CD8-positive, alpha-beta T cell (primary cell): ENCODE measurements at regions of chr6 and their contacts with region 1.

Region 1: GRCh38 chr6:135145063-135145800 is 35.9 kb upstream of the MYB start:
- DNase-seq: peak in 2 of 9 experiments; percentile 51 to 65
- ATAC-seq: peak; percentile 79
- H3K4me3 ChIP-seq: no peak overlapping the region
- H3K4me3 Mint-ChIP-seq: peak overlapping the region; percentile 32
- H3K27ac ChIP-seq: peak overlapping the region in 1 of 2 experiments; percentile 9
- H3K27ac Mint-ChIP-seq: peak overlapping the region; percentile 58
- H3K4me1 ChIP-seq: peaks cover 14% of the 10 kb centered on the region
- H3K4me1 Mint-ChIP-seq: peaks cover 39% of the 10 kb centered on the region
- H3K27me3 ChIP-seq: no peaks in the 10 kb centered on the region
- H3K27me3 Mint-ChIP-seq: no peaks in the 10 kb centered on the region
- CTCF ChIP-seq: peak; percentile 81

Region 2: GRCh38 chr6:135054569-135055498 is 90.4 kb before region 1 on chr6 and contains the start of gene HBS1L:
- CTCF ChIA-PET with region 1: interaction called, 22 read pairs
- POLR2A ChIA-PET with region 1: interaction called, 16 read pairs
- intact Hi-C with region 1: no loop called
- DNase-seq: peak; percentile 91 to 100 (median 96)
- ATAC-seq: peak; percentile 96
- H3K4me3 ChIP-seq: peak within 1 kb of the TSS; percentile 76 to 88
- H3K4me3 Mint-ChIP-seq: peak within 1 kb of the TSS; percentile 98
- H3K27ac ChIP-seq: peak within 1 kb of the TSS; percentile 87 to 90
- H3K27ac Mint-ChIP-seq: peak within 1 kb of the TSS; percentile 99
- H3K4me1 ChIP-seq: peaks cover 25% of the 10 kb centered on the region
- H3K4me1 Mint-ChIP-seq: peaks cover 42% of the 10 kb centered on the region
- H3K27me3 ChIP-seq: no peaks in the 10 kb centered on the region
- H3K27me3 Mint-ChIP-seq: no peaks in the 10 kb centered on the region
- CTCF ChIP-seq: no peak
- total RNA-seq, gene HBS1L: 119 to 123 TPM

Region 3: DNA sequence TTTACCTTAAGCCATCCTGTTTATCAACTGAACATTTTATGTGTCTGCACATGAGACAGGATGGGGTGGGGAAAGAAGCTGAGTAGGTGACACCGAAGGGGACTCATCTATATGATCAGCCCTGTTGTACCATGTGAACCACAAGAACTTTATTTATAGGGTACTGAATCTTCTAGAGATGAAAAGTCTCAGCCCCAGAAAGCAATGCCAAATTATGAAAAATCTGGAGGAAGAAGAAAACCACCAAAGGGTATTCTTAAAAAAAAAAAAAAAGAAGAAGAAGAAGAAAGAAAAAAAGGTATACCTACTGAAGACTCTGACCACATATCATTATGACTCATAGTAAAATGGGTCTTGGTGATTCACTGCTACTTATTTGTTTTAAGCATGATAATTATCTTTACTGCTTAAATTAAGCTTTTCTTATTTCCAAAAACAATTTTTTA is 50.8 kb before region 1 on chr6:
- CTCF ChIA-PET with region 1: interaction called, 3 read pairs
- POLR2A ChIA-PET with region 1: no interaction called
- intact Hi-C with region 1: loop called in 1 of 2 experiments (anchors 2 kb)
- DNase-seq: peak in 7 of 9 experiments; percentile 27 to 79 (median 64)
- ATAC-seq: peak; percentile 95
- H3K4me3 ChIP-seq: no peak overlapping the region
- H3K4me3 Mint-ChIP-seq: peak overlapping the region; percentile 0
- H3K27ac ChIP-seq: peak overlapping the region; percentile 29 to 33
- H3K27ac Mint-ChIP-seq: peak overlapping the region; percentile 83
- H3K4me1 ChIP-seq: peaks cover 46% of the 10 kb centered on the region
- H3K4me1 Mint-ChIP-seq: peaks cover 68% of the 10 kb centered on the region
- H3K27me3 ChIP-seq: no peaks in the 10 kb centered on the region
- H3K27me3 Mint-ChIP-seq: no peaks in the 10 kb centered on the region
- CTCF ChIP-seq: no peak

Region 4: DNA sequence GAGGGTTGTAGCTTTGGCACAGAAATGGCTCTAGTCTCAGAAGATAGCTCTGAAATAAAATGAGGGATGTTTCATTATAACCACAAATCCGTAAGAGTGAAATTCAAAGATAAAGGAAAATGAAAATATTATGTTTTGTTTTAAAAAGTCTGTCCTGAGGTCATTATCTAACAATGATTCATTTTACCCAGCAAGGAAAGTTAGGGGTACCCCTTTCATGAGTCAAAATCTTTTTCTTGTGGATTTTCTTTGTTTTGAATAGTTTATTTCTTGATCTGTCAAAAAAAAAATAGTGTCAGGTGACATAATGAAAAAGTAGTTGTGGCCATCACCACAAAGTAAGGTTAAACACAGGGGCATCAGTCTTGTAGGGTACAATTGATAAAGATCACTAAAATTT is 23.8 kb before region 1 on chr6:
- CTCF ChIA-PET with region 1: interaction called, 36 read pairs
- POLR2A ChIA-PET with region 1: interaction called, 5 read pairs
- intact Hi-C with region 1: no loop called
- DNase-seq: no peak
- ATAC-seq: no peak
- H3K4me3 ChIP-seq: no peak overlapping the region
- H3K4me3 Mint-ChIP-seq: no peak overlapping the region
- H3K27ac ChIP-seq: no peak overlapping the region
- H3K27ac Mint-ChIP-seq: no peak overlapping the region
- H3K4me1 ChIP-seq: peaks cover 30% of the 10 kb centered on the region
- H3K4me1 Mint-ChIP-seq: peaks cover 45% of the 10 kb centered on the region
- H3K27me3 ChIP-seq: peaks cover 0 to 4% of the 10 kb centered on the region in 2 experiments
- H3K27me3 Mint-ChIP-seq: no peaks in the 10 kb centered on the region
- CTCF ChIP-seq: no peak

Region 5: DNA sequence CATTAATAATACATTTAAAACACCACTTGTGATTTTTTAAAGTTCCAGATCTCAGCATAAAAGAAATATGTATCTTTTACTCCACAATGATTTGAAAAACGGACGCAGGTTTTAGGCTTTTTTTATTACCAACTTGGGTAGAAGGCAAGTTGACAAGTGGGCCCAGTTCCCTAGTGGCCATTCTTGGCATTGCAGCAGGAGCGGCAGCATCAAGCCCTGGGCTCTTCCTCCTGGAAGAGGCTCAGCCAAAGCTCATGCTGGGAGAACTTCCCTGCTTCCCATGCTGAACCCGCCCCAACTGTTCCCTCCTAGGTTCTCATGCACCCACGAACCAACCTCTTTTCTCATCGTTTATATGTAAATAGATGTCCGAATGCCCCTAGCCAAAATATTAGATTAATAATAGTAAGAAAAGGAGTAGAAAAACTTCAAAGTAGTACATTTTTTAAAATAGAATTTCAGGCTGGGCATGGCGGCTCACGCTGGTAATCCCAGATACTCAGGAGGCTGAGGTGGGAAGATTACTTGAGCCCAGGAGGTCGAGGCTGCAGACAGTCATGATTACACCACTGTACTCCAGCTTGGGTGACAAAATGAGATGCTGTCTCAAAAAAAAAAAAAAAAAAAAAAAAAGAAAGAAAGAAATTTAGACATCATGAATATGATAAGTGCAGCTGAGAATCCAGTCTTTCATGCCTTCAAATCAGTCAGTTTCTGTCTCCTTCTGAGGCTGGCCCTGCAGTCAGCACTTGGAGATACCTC is 17.6 kb after region 1 on chr6:
- CTCF ChIA-PET with region 1: interaction called, 19 read pairs
- POLR2A ChIA-PET with region 1: interaction called, 3 read pairs
- intact Hi-C with region 1: loop called (anchors 1 to 2 kb)
- DNase-seq: peak in 6 of 9 experiments; percentile 24 to 64 (median 40)
- ATAC-seq: no peak
- H3K4me3 ChIP-seq: no peak overlapping the region
- H3K4me3 Mint-ChIP-seq: peak overlapping the region; percentile 42
- H3K27ac ChIP-seq: no peak overlapping the region
- H3K27ac Mint-ChIP-seq: peak overlapping the region; percentile 73
- H3K4me1 ChIP-seq: peaks cover 20% of the 10 kb centered on the region
- H3K4me1 Mint-ChIP-seq: peaks cover 26% of the 10 kb centered on the region
- H3K27me3 ChIP-seq: no peaks in the 10 kb centered on the region
- H3K27me3 Mint-ChIP-seq: no peaks in the 10 kb centered on the region
- CTCF ChIP-seq: peak; percentile 62

Region 6: GRCh38 chr6:135423649-135424128 is 278.5 kb after region 1 on chr6:
- CTCF ChIA-PET with region 1: interaction called, 16 read pairs
- POLR2A ChIA-PET with region 1: no interaction called
- intact Hi-C with region 1: loop called (anchors 1 kb)
- DNase-seq: peak in 2 of 9 experiments; percentile 35 to 47
- ATAC-seq: peak; percentile 48
- H3K4me3 ChIP-seq: no peak overlapping the region
- H3K4me3 Mint-ChIP-seq: no peak overlapping the region
- H3K27ac ChIP-seq: no peak overlapping the region
- H3K27ac Mint-ChIP-seq: no peak overlapping the region
- H3K4me1 ChIP-seq: no peaks in the 10 kb centered on the region
- H3K4me1 Mint-ChIP-seq: no peaks in the 10 kb centered on the region
- H3K27me3 ChIP-seq: no peaks in the 10 kb centered on the region
- H3K27me3 Mint-ChIP-seq: no peaks in the 10 kb centered on the region
- CTCF ChIP-seq: peak; percentile 81